OCI-LY7 (cell line): ENCODE measurements at regions of chr13 and their contacts with region 1.

Region 1: DNA sequence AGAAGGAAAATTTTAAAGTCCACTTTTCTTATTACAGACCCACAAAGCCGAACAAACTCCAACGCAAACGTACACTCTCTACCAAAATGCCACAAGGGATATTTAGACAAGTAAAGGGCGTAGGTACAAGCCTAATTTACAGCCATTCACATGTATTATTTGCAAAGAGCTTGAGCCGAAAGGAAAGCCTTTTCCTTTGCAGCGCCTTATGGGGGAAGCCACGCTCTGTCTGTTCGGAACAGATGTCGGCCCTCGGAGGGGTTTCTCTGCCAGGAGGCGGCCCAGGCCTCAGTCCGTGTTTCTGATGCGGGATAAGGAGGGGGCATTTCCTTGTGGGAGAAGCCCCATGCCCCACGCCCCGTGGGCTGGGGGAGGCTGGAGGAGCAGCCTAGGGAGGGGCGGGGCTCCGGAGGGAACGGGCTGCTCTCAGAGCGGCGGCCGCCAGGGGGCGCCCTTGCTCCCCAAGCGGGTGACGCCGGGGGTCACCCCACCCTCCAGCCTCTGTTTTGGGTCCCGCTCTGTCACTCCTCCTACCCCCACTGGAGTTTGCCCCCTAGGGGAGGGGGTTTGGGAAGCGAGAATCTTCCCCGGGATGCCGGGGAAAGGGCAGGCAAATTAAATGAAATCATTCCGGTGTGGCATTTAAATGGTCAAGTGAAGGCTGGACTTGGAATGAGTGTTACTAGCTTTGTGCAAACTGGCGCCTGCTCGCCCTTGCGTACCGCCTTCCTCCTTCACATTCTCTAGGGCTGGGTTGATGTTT is 2.9 kb downstream of the HTR2A start:
- DNase-seq: peak; percentile 69
- H3K4me3 ChIP-seq: no peak overlapping the region
- H3K27ac ChIP-seq: no peak overlapping the region
- H3K4me1 ChIP-seq: no peaks in the 10 kb centered on the region
- CTCF ChIP-seq: peak; percentile 96

Region 2: GRCh38 chr13:47256618-47257017 is 362.6 kb after region 1 on chr13:
- CTCF ChIA-PET with region 1: no interaction called
- POLR2A ChIA-PET with region 1: no interaction called
- intact Hi-C with region 1: loop called (anchors 5 kb)
- DNase-seq: no peak
- H3K4me3 ChIP-seq: no peak overlapping the region
- H3K27ac ChIP-seq: no peak overlapping the region
- H3K4me1 ChIP-seq: no peaks in the 10 kb centered on the region
- CTCF ChIP-seq: no peak